Esophagus muscularis mucosa (tissue), 4 donors: ENCODE measurements at regions of chr12 and their contacts with region 1.

Region 1: DNA sequence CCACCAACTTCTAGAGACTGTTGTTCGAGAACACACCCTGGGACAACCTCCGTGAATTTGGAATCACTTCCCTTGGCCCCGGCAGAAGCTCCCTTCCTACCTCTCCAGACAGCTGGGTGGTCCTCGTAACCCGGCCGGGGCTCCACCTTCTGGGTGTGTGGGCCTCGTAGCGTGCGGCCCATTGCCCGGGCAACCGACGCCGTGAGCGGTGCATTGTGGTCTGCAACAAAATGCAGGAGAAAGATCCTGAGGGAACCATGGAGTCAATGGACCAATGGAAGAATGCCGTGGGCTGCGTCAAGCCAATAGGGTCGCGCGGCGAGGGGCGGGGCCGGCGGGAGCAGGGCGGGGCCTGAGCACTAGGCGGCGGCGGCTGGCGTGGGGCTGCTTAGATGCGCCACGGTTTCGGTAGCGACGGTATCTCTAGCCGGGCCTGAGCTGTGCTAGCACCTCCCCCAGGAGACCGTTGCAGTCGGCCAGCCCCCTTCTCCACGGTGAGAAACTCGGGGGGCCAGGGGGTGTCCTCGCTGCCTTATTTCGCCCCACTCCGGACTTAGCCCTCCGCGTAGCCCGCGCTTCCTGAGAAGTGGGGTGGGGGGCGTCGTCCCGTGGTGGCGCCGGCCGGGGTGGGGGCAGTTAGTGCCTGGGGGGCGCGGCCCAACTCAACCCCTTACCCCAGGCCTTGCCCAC is at the start of gene DYNLL1:
- DNase-seq: peak; percentile 99
- H3K4me3 ChIP-seq: peak within 1 kb of the TSS; percentile 78 to 96 (median 88)
- H3K27ac ChIP-seq: peak within 1 kb of the TSS; percentile 88 to 94 (median 91)
- H3K4me1 ChIP-seq: peaks cover 21 to 36% (median 30%) of the 10 kb centered on the region in 4 donors
- H3K27me3 ChIP-seq: no peaks in the 10 kb centered on the region
- CTCF ChIP-seq: peak in 1 of 3 experiments; percentile 29
- EP300 ChIP-seq: no peak
- POLR2A ChIP-seq: peak; percentile 67
- total RNA-seq, gene DYNLL1: 229 to 289 (median 269) TPM

Region 2: GRCh38 chr12:120528861-120529525 is 33.1 kb after region 1 on chr12 and contains the start of gene COQ5:
- intact Hi-C with region 1: loop called (anchors 2 kb)
- DNase-seq: peak; percentile 97
- H3K4me3 ChIP-seq: peak within 1 kb of the TSS; percentile 69 to 94 (median 80)
- H3K27ac ChIP-seq: peak within 1 kb of the TSS; percentile 90 to 95 (median 94)
- H3K4me1 ChIP-seq: peaks cover 0 to 23% (median 20%) of the 10 kb centered on the region in 4 donors
- H3K27me3 ChIP-seq: no peaks in the 10 kb centered on the region
- CTCF ChIP-seq: no peak
- EP300 ChIP-seq: no peak
- POLR2A ChIP-seq: no peak
- total RNA-seq, gene COQ5: 12.1 to 25.3 (median 21.4) TPM

Region 3: DNA sequence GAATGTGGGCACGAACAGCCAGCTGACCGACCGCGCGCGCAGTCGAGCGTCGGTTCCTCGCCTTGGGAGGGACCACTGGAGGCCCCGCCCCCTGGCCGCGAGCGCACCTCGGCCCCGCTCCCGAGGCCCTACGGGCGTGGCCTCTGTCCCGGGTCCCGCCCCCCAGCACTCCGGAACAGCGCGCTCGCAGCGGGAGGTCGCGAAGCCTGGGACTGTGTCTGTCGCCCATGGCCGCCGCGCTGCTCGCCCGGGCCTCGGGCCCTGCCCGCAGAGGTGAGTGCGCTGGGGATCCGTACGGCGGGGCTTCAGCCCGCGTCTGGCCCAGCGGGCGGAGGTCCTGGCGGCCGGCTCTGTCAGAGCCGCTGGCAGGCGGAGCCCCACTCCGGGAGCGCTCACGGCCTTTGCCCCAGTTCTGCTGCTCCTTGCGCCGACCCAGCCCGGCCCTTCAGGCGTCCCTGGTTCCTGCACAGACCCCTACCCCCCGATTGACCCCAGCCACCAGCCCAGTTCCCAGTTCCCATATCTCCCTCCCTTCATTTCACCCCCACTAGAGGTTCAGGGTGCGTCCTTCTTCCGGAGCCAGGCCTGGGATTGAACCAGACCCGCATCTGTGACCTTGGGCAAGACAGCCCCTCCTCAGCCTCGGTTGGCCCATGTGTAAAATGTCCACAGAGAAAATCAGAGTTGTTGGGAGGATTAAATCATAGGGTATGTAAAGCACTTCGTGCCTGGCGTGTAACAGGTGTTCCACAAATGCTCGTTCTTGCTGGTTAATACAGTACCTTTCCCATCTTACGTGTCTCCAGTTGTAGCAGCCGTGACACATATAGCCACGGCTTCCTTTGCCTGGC is 230.0 kb after region 1 on chr12 and contains the start of gene ACADS:
- intact Hi-C with region 1: no loop called
- DNase-seq: peak; percentile 94
- H3K4me3 ChIP-seq: peak within 1 kb of the TSS; percentile 64 to 85 (median 71)
- H3K27ac ChIP-seq: peak within 1 kb of the TSS; percentile 74 to 89 (median 80)
- H3K4me1 ChIP-seq: peaks cover 11 to 37% (median 23%) of the 10 kb centered on the region in 4 donors
- H3K27me3 ChIP-seq: no peaks in the 10 kb centered on the region
- CTCF ChIP-seq: peak in 1 of 3 experiments; percentile 28
- EP300 ChIP-seq: no peak
- POLR2A ChIP-seq: no peak
- total RNA-seq, gene ACADS: 31.6 to 64.2 (median 46.0) TPM